Dorsolateral prefrontal cortex (tissue), 120 donors: ENCODE measurements at regions of chr15 and their contacts with region 1.

Region 1: DNA sequence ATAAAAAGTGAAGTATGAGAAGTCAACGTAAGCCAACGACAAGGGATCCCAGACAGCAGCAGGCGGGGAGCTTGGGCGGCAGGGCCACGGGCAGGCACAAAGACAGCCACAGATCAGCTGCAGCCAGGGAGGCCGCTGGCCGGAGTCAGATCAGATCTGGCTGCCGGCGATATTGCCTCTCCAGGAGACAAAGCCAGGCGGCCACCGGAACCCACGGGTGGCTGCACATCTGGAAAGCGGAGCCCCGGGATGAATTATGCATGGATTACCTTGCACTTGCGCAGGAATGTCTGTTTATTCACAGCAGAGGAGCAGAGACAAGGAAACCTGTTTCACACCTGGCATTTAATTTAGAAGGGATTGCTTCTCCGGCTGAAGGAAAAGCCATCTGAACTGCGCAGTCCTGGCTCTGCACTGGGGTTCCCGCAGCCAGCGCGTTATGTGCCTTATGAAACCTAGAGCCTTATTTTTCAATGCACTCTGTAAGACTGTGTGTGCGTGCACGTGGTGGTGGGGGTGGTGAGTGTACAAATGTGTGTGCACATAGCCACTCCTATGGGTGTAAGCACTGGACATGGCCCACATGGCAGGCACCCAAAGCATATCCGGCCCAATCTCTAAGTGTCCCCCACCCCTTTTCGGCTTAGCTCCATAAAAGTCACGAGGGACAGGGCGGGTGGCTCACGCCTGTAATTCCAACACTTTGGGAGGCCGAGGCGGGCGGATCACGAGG is 427.8 kb upstream of the MCTP2 start:
- DNase-seq: no peak
- H3K4me3 ChIP-seq: no peak overlapping the region
- H3K27ac ChIP-seq: no peak overlapping the region
- H3K27me3 ChIP-seq: peaks cover 0 to 4% (median 0%) of the 10 kb centered on the region in 45 donors
- CTCF ChIP-seq: no peak

Region 2: DNA sequence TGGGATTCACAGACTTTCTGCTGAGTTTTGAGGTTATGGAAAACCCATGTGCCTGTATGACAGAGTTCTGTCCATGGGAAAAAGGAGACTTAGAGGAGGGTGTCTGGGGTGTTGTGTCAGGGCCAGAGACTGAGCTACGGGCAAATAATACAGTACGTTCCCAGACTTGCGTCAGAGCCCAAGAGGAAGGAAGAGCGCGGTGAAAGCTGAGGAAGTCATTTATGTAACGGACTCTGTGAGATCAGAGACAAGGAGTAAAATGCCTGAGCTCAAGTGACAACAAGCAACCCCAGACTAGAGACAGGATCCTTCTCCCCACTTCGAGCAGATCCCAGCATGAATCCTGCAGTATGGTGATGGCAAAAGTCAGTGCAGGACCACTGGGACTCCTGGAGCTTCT is 59.2 kb after region 1 on chr15:
- intact Hi-C with region 1: loop called in 1 of 2 experiments (anchors 10 kb)
- DNase-seq: no peak
- H3K4me3 ChIP-seq: no peak overlapping the region
- H3K27ac ChIP-seq: peak overlapping the region in 7 of 59 donors; percentile 1 to 63 (median 27)
- H3K27me3 ChIP-seq: peaks cover 0 to 3% (median 0%) of the 10 kb centered on the region in 45 donors
- CTCF ChIP-seq: no peak